Posterior cingulate gyrus (tissue), 11 donors: ENCODE measurements at regions of chr17 and their contacts with region 1.

Region 1: GRCh38 chr17:44864866-44865660 is 17.4 kb downstream of the HIGD1B start:
- DNase-seq: peak in 8 of 10 donors; percentile 19 to 91 (median 61)

Region 2: DNA sequence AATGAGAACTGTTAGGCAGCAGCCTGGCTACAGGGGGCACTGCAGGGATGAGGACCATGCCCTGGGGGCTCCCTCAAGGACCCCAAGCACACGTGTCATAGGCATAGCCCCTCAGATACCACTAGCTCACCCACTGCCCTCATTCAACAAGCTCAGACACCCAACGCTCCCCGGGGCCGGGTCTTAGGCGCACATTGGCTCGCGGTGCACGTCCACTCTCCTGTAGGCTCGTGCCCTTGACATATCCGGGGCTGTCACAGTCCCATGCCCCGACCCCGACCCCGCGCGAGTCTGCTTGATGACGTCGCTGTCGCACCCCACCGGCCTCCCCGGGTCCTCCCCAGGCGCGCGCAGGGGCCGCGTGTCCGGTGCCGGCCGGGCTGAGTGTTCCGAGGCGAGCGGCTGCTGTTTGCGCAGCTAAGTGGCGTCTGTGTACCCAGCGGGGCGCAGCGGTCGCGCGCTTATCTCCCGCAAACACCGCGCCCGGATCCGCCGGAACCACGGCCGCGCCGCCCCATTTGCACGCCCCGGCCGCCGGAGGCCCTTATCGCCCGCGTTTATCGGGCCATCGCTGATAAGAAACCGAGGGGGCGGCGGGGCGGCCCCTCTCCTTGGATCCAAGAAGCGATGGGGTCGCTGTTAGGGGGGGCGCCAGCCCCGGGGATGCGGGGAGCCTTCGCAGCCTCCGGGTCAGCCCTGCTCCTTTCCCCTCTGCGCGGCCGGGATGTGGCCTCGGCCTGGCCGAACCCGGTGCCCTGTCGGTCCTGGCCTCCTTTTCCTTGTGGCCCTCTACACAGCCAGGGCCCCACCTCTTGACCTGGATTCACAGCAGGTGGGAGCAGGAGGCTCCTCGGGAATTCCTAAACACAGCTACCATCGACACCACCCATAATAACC is 881.3 kb before region 1 on chr17:
- intact Hi-C with region 1: no loop called
- DNase-seq: peak in 6 of 10 donors; percentile 12 to 86 (median 54)

Region 3: DNA sequence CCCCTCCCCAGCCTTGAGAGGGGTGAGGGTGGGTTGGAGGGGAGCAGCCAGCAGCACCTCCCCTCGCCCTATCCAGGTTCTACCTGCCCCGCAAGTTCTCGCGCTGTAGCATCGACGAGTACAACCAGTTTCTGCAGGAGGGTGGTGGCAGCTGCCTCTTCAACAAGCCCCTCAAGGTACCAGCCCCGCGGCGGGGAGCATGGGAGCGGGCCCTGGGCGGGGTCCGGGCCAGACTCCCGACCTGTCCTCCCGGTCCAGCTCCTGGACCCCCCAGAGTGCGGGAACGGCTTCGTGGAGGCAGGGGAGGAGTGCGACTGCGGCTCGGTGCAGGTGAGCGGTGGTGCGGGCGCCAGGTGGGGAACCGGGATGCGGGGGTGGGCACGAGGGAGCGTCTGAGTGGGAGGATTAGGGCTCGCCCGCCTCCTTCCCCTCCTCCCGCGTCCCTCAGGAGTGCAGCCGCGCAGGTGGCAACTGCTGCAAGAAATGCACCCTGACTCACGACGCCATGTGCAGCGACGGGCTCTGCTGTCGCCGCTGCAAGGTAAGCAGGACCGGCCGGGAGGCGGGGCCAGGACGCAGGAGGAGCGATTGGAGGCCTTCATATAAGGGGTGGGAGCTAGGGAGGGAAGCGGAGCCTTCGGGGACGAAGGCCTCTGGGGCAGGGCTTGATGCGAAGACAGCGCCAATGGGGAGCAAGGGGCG is 89.8 kb before region 1 on chr17:
- intact Hi-C with region 1: loop called (anchors 1 kb)
- DNase-seq: peak in 9 of 10 donors; percentile 90 to 99 (median 97)

Region 4: GRCh38 chr17:45385331-45385997 is 520.4 kb after region 1 on chr17:
- intact Hi-C with region 1: no loop called
- DNase-seq: peak; percentile 76 to 98 (median 90)